ENCODE measurements at regions of chr21 and their contacts with region 1.

Region 1: GRCh38 chr21:28992526-28993292 is at the start of gene LTN1:
- DNase-seq: peak; percentile 99
- ATAC-seq: peak; percentile 94
- H3K4me3 ChIP-seq: peak within 1 kb of the TSS; percentile 61 to 95 (median 83)
- H3K4me3 Mint-ChIP-seq: peak within 1 kb of the TSS; percentile 92
- H3K27ac ChIP-seq: peak within 1 kb of the TSS; percentile 88 to 93
- H3K27ac Mint-ChIP-seq: peak within 1 kb of the TSS; percentile 97
- H3K4me1 ChIP-seq: peaks cover 18 to 20% of the 10 kb centered on the region in 2 donors
- H3K4me1 Mint-ChIP-seq: peaks cover 25% of the 10 kb centered on the region
- H3K27me3 ChIP-seq: no peaks in the 10 kb centered on the region
- H3K27me3 Mint-ChIP-seq: no peaks in the 10 kb centered on the region
- CTCF ChIP-seq: no peak
- total RNA-seq, gene LTN1: 30.1 and 32.6 TPM in 2 replicates

Region 2: GRCh38 chr21:28884976-28885852 is 107.5 kb before region 1 on chr21:
- CTCF ChIA-PET with region 1: no interaction called
- POLR2A ChIA-PET with region 1: no interaction called
- intact Hi-C with region 1: loop called (anchors 1 kb)
- DNase-seq: peak; percentile 97
- ATAC-seq: peak; percentile 92
- H3K4me3 ChIP-seq: peak overlapping the region; percentile 56 to 94 (median 79)
- H3K4me3 Mint-ChIP-seq: peak overlapping the region; percentile 94
- H3K27ac ChIP-seq: peak overlapping the region; percentile 84 to 85
- H3K27ac Mint-ChIP-seq: peak overlapping the region; percentile 98
- H3K4me1 ChIP-seq: peaks cover 6 to 15% of the 10 kb centered on the region in 2 donors
- H3K4me1 Mint-ChIP-seq: peaks cover 20% of the 10 kb centered on the region
- H3K27me3 ChIP-seq: peaks cover 0 to 2% (median 0%) of the 10 kb centered on the region in 4 experiments
- H3K27me3 Mint-ChIP-seq: peaks cover 7% of the 10 kb centered on the region
- CTCF ChIP-seq: no peak

Region 3: GRCh38 chr21:28975397-28975796 is 17.3 kb before region 1 on chr21:
- CTCF ChIA-PET with region 1: no interaction called
- POLR2A ChIA-PET with region 1: no interaction called
- intact Hi-C with region 1: no loop called
- DNase-seq: no peak
- ATAC-seq: no peak
- H3K4me3 ChIP-seq: no peak overlapping the region
- H3K4me3 Mint-ChIP-seq: no peak overlapping the region
- H3K27ac ChIP-seq: no peak overlapping the region
- H3K27ac Mint-ChIP-seq: no peak overlapping the region
- H3K4me1 ChIP-seq: no peaks in the 10 kb centered on the region
- H3K4me1 Mint-ChIP-seq: no peaks in the 10 kb centered on the region
- H3K27me3 ChIP-seq: no peaks in the 10 kb centered on the region
- H3K27me3 Mint-ChIP-seq: no peaks in the 10 kb centered on the region
- CTCF ChIP-seq: no peak

Region 4: GRCh38 chr21:29018540-29018939 is 25.8 kb after region 1 on chr21:
- CTCF ChIA-PET with region 1: interaction called, 23 read pairs
- POLR2A ChIA-PET with region 1: interaction called, 25 read pairs
- intact Hi-C with region 1: loop called (anchors 1 kb)
- DNase-seq: no peak
- ATAC-seq: no peak
- H3K4me3 ChIP-seq: peak overlapping the region; percentile 74 to 91 (median 81)
- H3K4me3 Mint-ChIP-seq: peak overlapping the region; percentile 95
- H3K27ac ChIP-seq: peak overlapping the region; percentile 73 to 92
- H3K27ac Mint-ChIP-seq: peak overlapping the region; percentile 96
- H3K4me1 ChIP-seq: peaks cover 14 to 18% of the 10 kb centered on the region in 2 donors
- H3K4me1 Mint-ChIP-seq: peaks cover 22% of the 10 kb centered on the region
- H3K27me3 ChIP-seq: no peaks in the 10 kb centered on the region
- H3K27me3 Mint-ChIP-seq: no peaks in the 10 kb centered on the region
- CTCF ChIP-seq: no peak

Region 5: GRCh38 chr21:29024474-29025327 is 32.0 kb after region 1 on chr21 and contains the start of gene USP16:
- CTCF ChIA-PET with region 1: interaction called, 23 read pairs
- POLR2A ChIA-PET with region 1: interaction called, 25 read pairs
- intact Hi-C with region 1: loop called (anchors 1 kb)
- DNase-seq: peak; percentile 99
- ATAC-seq: peak; percentile 93
- H3K4me3 ChIP-seq: peak within 1 kb of the TSS; percentile 58 to 90 (median 74)
- H3K4me3 Mint-ChIP-seq: peak within 1 kb of the TSS; percentile 95
- H3K27ac ChIP-seq: peak within 1 kb of the TSS; percentile 97 to 98
- H3K27ac Mint-ChIP-seq: peak within 1 kb of the TSS; percentile 99
- H3K4me1 ChIP-seq: peaks cover 16 to 17% of the 10 kb centered on the region in 2 donors
- H3K4me1 Mint-ChIP-seq: peaks cover 40% of the 10 kb centered on the region
- H3K27me3 ChIP-seq: no peaks in the 10 kb centered on the region
- H3K27me3 Mint-ChIP-seq: no peaks in the 10 kb centered on the region
- CTCF ChIP-seq: no peak
- total RNA-seq, gene USP16: 54.7 and 55.7 TPM in 2 replicates

Region 6: DNA sequence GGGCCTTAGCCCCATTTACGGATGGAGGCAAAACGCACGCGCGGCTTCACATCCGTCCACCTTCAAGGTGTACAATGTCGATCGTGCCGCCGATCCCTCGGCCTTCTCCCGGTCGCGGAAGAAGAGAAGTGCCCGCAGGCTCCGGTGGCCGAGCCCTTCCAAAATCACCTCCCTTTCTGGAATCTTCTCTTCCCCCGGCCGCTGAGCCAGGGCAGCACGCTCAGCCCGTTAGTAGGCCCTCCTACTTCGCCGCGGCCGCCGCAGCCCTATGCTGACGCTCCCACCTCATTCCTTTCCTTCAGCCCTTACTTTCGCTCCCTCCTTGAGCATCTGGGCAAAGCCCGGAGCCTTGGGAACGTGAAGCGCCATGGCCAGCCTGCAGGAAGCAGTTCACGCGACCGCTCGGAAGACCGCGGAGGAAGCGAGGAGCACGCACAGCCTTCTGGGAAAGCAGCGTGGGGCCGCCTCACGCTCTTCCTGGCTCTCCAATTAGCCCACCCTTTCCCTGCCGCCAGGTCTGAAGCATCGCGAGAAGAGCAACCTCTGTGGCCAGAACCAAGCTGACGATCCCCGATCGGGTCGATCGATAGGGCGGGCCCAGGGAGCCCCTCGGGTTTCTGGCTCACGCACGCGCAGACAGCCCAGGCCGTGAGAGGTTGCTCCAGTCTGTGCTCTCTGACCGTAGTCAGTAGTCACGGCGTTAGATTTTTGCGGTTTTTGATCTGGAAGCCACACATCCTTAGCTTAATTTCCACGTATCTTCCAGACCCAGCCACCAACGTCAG is 80.7 kb after region 1 on chr21 and contains the start of gene CCT8:
- CTCF ChIA-PET with region 1: no interaction called
- POLR2A ChIA-PET with region 1: interaction called, 6 read pairs
- intact Hi-C with region 1: loop called (anchors 1 kb)
- DNase-seq: peak; percentile 99
- ATAC-seq: peak; percentile 91
- H3K4me3 ChIP-seq: peak within 1 kb of the TSS; percentile 72 to 99 (median 98)
- H3K4me3 Mint-ChIP-seq: peak within 1 kb of the TSS; percentile 99
- H3K27ac ChIP-seq: peak within 1 kb of the TSS; percentile 80 to 86
- H3K27ac Mint-ChIP-seq: peak within 1 kb of the TSS; percentile 96
- H3K4me1 ChIP-seq: peaks cover 27 to 33% of the 10 kb centered on the region in 2 donors
- H3K4me1 Mint-ChIP-seq: peaks cover 57% of the 10 kb centered on the region
- H3K27me3 ChIP-seq: no peaks in the 10 kb centered on the region
- H3K27me3 Mint-ChIP-seq: no peaks in the 10 kb centered on the region
- CTCF ChIP-seq: no peak
- total RNA-seq, gene CCT8: 92.8 and 100 TPM in 2 replicates